Activated CD4-positive, alpha-beta memory T cell treated with anti-CD3 and anti-CD28 coated beads for 36 hours (primary cell): ENCODE measurements at regions of chr9 and their contacts with region 1.

Region 1: DNA sequence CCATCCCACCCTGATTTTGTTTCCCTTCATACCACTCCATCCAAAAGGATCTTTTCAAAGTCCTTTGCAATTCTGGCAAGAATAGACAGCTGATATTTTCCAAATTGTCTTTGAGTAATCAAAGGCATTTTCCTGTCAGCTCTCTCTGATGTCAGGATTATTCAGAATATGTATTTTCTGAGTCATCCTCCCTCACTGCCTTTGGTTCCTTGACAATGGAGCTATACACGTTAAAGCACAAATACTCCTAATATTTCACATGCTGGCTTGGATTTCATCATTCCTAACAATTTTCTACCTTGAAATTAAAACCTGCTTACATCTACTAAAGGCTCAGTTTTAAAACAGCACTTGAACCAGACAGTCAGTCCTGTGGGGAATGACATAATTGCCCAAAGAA is 379.4 kb downstream of the GADD45G start:
- DNase-seq: no peak
- H3K4me3 Mint-ChIP-seq: peak overlapping the region; percentile 11
- H3K27ac Mint-ChIP-seq: peak overlapping the region; percentile 79
- H3K4me1 Mint-ChIP-seq: peaks cover 49% of the 10 kb centered on the region
- H3K27me3 Mint-ChIP-seq: peaks cover 33% of the 10 kb centered on the region

Region 2: GRCh38 chr9:89418882-89419640 is 565.2 kb before region 1 on chr9:
- CTCF ChIA-PET with region 1: no interaction called
- POLR2A ChIA-PET with region 1: no interaction called
- intact Hi-C with region 1: loop called (anchors 5 kb)
- DNase-seq: peak; percentile 87
- H3K4me3 Mint-ChIP-seq: peak overlapping the region; percentile 58
- H3K27ac Mint-ChIP-seq: peak overlapping the region; percentile 100
- H3K4me1 Mint-ChIP-seq: peaks cover 92% of the 10 kb centered on the region
- H3K27me3 Mint-ChIP-seq: no peaks in the 10 kb centered on the region

Region 3: DNA sequence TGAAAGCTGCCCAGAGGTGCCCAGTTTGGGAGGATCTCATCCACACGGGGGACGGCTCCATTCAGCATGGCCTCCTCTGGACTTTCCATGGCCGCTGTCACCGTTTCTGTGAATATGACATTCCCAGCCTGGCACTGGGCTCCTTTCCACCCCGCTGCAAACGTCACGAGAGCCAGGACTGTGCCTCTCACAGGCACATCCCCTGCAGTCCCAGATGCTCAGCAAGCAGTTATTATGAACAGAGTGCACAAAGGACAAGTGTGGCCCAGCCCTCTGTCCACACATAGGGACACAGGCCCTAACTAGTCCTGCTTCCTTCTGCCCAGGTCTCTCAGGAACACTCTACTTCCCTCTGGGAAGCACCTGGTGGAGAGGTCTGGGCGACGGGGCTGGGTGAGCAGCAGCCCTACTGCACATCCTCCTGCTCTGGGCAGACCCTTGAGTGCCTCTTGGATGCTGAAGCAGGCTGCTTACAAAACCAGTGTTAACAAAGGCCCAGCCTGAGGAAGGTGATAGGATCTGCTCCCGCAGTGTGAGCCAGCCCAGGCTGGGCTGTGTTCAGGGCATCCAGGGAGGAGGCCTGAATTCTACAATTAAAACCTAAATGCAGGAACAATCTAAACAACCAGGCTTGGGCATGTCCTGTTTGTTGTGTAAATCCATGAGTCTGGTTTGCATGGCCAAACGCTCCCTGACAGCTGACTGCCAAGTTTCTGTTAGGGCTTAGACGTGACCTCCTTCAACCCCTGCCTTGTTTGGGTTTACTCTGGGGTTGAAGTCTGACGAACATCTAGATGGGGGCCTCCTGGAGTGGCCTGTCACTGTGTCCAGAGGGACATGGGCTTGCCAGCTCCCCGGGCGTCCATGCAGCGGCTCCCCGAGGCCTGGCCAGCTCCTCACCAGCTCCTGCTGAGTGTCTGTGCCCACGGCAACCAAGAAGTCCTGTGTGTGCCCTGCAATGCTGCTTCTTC is 109.6 kb before region 1 on chr9:
- CTCF ChIA-PET with region 1: no interaction called
- POLR2A ChIA-PET with region 1: no interaction called
- intact Hi-C with region 1: no loop called
- DNase-seq: peak; percentile 3
- H3K4me3 Mint-ChIP-seq: no peak overlapping the region
- H3K27ac Mint-ChIP-seq: no peak overlapping the region
- H3K4me1 Mint-ChIP-seq: no peaks in the 10 kb centered on the region
- H3K27me3 Mint-ChIP-seq: no peaks in the 10 kb centered on the region

Region 4: GRCh38 chr9:89919169-89919681 is 65.0 kb before region 1 on chr9:
- CTCF ChIA-PET with region 1: no interaction called
- POLR2A ChIA-PET with region 1: interaction called, 3 read pairs
- intact Hi-C with region 1: loop called (anchors 1 kb)
- DNase-seq: peak; percentile 71
- H3K4me3 Mint-ChIP-seq: no peak overlapping the region
- H3K27ac Mint-ChIP-seq: peak overlapping the region; percentile 4
- H3K4me1 Mint-ChIP-seq: peaks cover 15% of the 10 kb centered on the region
- H3K27me3 Mint-ChIP-seq: no peaks in the 10 kb centered on the region

Region 5: DNA sequence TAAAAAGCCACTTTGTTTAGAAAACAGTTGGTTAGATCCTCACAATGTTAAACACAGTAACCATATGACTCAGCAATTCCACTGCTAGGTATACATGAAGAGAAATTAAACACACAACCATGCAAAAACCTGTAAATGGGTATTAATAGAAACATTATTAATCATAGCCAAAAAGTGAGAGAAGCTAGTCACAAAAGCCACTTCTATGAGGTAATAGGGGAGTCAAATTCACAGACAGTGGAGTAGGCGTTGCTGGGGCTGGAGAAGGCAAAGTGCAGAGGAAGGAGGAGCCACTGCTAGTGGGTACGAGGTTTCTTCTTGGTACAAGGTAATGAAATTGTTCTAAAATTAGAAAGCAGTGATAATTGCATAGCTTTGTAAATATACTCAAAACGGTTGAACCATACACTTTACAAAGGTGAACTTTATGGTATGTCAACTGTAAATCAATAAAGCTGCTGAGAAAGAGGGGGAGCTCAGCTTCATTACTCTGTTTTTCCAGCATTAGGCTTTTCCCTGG is 15.0 kb before region 1 on chr9:
- CTCF ChIA-PET with region 1: interaction called, 8 read pairs
- POLR2A ChIA-PET with region 1: no interaction called
- intact Hi-C with region 1: loop called (anchors 1 kb)
- DNase-seq: peak; percentile 56
- H3K4me3 Mint-ChIP-seq: no peak overlapping the region
- H3K27ac Mint-ChIP-seq: no peak overlapping the region
- H3K4me1 Mint-ChIP-seq: peaks cover 30% of the 10 kb centered on the region
- H3K27me3 Mint-ChIP-seq: peaks cover 4% of the 10 kb centered on the region

Region 6: DNA sequence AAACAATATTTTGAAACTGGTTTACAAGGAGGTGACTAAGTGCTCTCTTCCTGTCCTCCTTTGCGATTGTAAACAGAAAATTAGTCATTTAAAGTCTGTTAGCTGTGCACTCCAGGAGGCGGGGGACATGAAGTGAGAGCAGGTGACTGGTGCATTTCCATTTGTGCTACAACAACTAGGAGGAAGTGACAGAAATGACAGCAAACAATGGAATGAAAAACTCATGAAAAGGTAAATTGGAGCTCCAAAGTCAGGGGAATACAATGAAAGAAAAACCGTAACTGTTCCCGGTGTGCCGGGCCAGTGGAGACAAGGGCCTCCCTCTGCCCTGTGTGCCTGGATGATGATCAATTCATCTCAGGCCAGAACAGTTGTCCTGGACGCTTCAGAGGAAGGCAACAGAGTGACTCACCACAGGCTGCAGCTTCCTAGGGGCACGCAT is 60.5 kb after region 1 on chr9:
- CTCF ChIA-PET with region 1: no interaction called
- POLR2A ChIA-PET with region 1: no interaction called
- intact Hi-C with region 1: loop called (anchors 5 kb)
- DNase-seq: peak; percentile 61
- H3K4me3 Mint-ChIP-seq: no peak overlapping the region
- H3K27ac Mint-ChIP-seq: peak overlapping the region; percentile 4
- H3K4me1 Mint-ChIP-seq: peaks cover 23% of the 10 kb centered on the region
- H3K27me3 Mint-ChIP-seq: peaks cover 3% of the 10 kb centered on the region

Region 7: GRCh38 chr9:90219548-90220118 is 235.4 kb after region 1 on chr9:
- CTCF ChIA-PET with region 1: no interaction called
- POLR2A ChIA-PET with region 1: no interaction called
- intact Hi-C with region 1: no loop called
- DNase-seq: peak; percentile 39
- H3K4me3 Mint-ChIP-seq: no peak overlapping the region
- H3K27ac Mint-ChIP-seq: no peak overlapping the region
- H3K4me1 Mint-ChIP-seq: no peaks in the 10 kb centered on the region
- H3K27me3 Mint-ChIP-seq: peaks cover 7% of the 10 kb centered on the region